CD8-positive, alpha-beta T cell (primary cell): ENCODE measurements at regions of chr14 and their contacts with region 1.

Region 1: DNA sequence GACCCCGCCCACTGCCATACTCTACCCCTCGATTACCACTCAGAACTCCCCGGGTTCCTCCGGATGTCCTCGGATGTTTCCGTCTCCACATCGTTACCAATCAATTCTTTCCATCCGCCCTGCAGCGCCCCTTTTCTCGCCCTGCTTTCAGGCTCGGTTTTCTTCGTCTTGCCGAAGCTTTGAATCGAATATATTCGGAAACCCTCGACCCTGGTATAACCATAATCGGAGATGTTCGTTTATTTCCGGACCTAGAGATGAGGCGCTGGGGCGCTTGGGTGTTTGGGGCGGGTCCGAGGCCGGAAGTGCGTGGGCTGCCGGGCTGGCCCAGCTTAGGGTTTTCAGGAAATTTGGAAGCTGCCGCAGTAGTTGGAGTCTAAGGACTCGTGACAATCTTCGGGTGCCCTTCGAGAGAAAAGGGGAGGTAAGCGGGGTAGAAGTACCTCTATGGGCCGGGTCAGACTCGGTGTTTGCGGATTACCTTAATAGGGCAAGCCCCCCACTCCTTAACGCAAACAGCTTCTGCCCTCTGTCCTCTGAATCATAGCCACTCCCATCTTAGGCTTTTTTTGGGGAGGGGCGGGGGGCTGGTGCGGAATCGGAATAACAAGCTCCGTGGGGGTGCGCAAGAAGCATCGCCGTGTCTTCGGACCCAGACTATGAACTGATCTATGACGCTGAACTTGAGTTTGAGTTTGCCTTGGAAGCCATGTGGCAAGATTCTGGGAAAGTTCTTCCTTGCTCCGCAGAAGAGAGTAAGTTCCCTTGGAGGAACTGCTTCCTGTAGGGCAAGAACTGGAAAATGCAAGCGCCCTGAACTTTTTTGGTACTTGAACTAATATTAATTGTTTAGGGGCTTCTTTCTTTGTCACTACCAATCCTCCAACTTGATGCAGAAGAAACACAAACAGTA is at the start of gene C14orf119:
- DNase-seq: peak in 8 of 9 experiments; percentile 98 to 100 (median 100)
- ATAC-seq: peak; percentile 86
- H3K4me3 ChIP-seq: peak within 1 kb of the TSS; percentile 81 to 93
- H3K4me3 Mint-ChIP-seq: no peak within 1 kb of the TSS
- H3K27ac ChIP-seq: peak within 1 kb of the TSS; percentile 93 to 98
- H3K27ac Mint-ChIP-seq: no peak within 1 kb of the TSS
- H3K4me1 ChIP-seq: peaks cover 39% of the 10 kb centered on the region
- H3K4me1 Mint-ChIP-seq: peaks cover 51% of the 10 kb centered on the region
- H3K27me3 ChIP-seq: no peaks in the 10 kb centered on the region
- H3K27me3 Mint-ChIP-seq: no peaks in the 10 kb centered on the region
- CTCF ChIP-seq: no peak
- total RNA-seq, gene C14orf119: 3.5 to 3.8 TPM

Region 2: GRCh38 chr14:22375321-22375930 is 720.0 kb before region 1 on chr14:
- CTCF ChIA-PET with region 1: no interaction called
- POLR2A ChIA-PET with region 1: no interaction called
- intact Hi-C with region 1: no loop called
- DNase-seq: peak in 2 of 9 experiments; percentile 12 to 20
- ATAC-seq: no peak
- H3K4me3 ChIP-seq: no peak overlapping the region
- H3K4me3 Mint-ChIP-seq: no peak overlapping the region
- H3K27ac ChIP-seq: no peak overlapping the region
- H3K27ac Mint-ChIP-seq: no peak overlapping the region
- H3K4me1 ChIP-seq: no peaks in the 10 kb centered on the region
- H3K4me1 Mint-ChIP-seq: no peaks in the 10 kb centered on the region
- H3K27me3 ChIP-seq: no peaks in the 10 kb centered on the region
- H3K27me3 Mint-ChIP-seq: no peaks in the 10 kb centered on the region
- CTCF ChIP-seq: no peak

Region 3: GRCh38 chr14:22829661-22830442 is 265.6 kb before region 1 on chr14 and contains the start of gene MRPL52:
- CTCF ChIA-PET with region 1: no interaction called
- POLR2A ChIA-PET with region 1: no interaction called
- intact Hi-C with region 1: no loop called
- DNase-seq: peak; percentile 81 to 97 (median 90)
- ATAC-seq: peak; percentile 95
- H3K4me3 ChIP-seq: peak within 1 kb of the TSS; percentile 89 to 91
- H3K4me3 Mint-ChIP-seq: peak within 1 kb of the TSS; percentile 92
- H3K27ac ChIP-seq: peak within 1 kb of the TSS; percentile 69 to 90
- H3K27ac Mint-ChIP-seq: peak within 1 kb of the TSS; percentile 96
- H3K4me1 ChIP-seq: peaks cover 13% of the 10 kb centered on the region
- H3K4me1 Mint-ChIP-seq: peaks cover 31% of the 10 kb centered on the region
- H3K27me3 ChIP-seq: peaks cover 0 to 5% of the 10 kb centered on the region in 2 experiments
- H3K27me3 Mint-ChIP-seq: peaks cover 7% of the 10 kb centered on the region
- CTCF ChIP-seq: no peak
- total RNA-seq, gene MRPL52: 22.3 to 25.7 TPM

Region 4: DNA sequence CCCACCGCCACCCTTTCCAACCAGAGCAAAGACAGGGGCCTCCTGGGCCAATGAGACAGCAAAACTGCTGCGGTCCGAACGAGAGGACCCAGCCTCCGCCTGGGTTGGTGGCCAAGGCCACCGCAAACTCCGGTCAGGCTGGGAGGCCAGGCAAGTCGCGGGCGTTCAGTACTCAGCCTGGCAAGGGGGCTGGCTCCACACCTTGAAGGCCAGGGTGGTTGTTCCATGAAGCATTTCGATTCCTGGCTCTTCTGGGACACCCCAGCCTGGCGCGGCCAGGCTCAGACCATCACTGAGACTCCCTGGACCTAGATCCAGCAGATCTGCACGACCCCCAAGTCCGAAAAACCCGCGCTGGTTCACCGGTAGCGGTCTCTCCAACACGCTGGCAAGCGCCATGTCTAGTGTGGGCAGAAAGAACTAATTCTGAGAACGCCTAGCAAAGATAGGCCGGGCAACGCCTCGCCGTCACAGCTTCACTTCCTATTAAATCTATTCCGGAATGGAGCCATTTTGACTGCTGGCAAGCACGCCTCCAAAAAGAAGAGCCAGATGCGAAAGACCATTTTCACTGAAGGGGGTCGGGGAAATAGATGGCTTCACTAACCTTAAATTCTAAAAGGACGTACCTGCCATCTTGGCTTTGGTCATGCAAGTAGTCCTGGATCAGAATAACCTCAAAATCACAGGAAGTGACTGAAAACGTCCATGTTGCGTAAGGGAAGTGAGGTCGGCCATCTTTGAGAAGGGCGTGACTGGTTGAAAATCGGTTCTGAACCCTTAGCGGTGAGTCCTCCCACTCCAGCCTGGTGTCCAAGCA is 60.8 kb before region 1 on chr14 and contains the start of gene PSMB5:
- CTCF ChIA-PET with region 1: no interaction called
- POLR2A ChIA-PET with region 1: no interaction called
- intact Hi-C with region 1: loop called (anchors 1 to 2 kb)
- DNase-seq: peak; percentile 74 to 97 (median 87)
- ATAC-seq: peak; percentile 91
- H3K4me3 ChIP-seq: peak within 1 kb of the TSS; percentile 67 to 71
- H3K4me3 Mint-ChIP-seq: peak within 1 kb of the TSS; percentile 90
- H3K27ac ChIP-seq: peak within 1 kb of the TSS; percentile 75 to 97
- H3K27ac Mint-ChIP-seq: peak within 1 kb of the TSS; percentile 98
- H3K4me1 ChIP-seq: peaks cover 21% of the 10 kb centered on the region
- H3K4me1 Mint-ChIP-seq: peaks cover 34% of the 10 kb centered on the region
- H3K27me3 ChIP-seq: no peaks in the 10 kb centered on the region
- H3K27me3 Mint-ChIP-seq: no peaks in the 10 kb centered on the region
- CTCF ChIP-seq: no peak
- total RNA-seq, gene PSMB5: 18.6 to 20.2 TPM

Region 5: GRCh38 chr14:23076785-23077408 is 18.6 kb before region 1 on chr14:
- CTCF ChIA-PET with region 1: interaction called, 37 read pairs
- POLR2A ChIA-PET with region 1: interaction called, 16 read pairs
- intact Hi-C with region 1: no loop called
- DNase-seq: peak in 3 of 9 experiments; percentile 43 to 66 (median 56)
- ATAC-seq: peak; percentile 89
- H3K4me3 ChIP-seq: no peak overlapping the region
- H3K4me3 Mint-ChIP-seq: no peak overlapping the region
- H3K27ac ChIP-seq: no peak overlapping the region
- H3K27ac Mint-ChIP-seq: no peak overlapping the region
- H3K4me1 ChIP-seq: peaks cover 2% of the 10 kb centered on the region
- H3K4me1 Mint-ChIP-seq: peaks cover 19% of the 10 kb centered on the region
- H3K27me3 ChIP-seq: no peaks in the 10 kb centered on the region
- H3K27me3 Mint-ChIP-seq: no peaks in the 10 kb centered on the region
- CTCF ChIP-seq: peak; percentile 85

Region 6: GRCh38 chr14:23286020-23286905 is 190.8 kb after region 1 on chr14 and contains the start of gene HOMEZ:
- CTCF ChIA-PET with region 1: no interaction called
- POLR2A ChIA-PET with region 1: no interaction called
- intact Hi-C with region 1: loop called in 1 of 2 experiments (anchors 1 kb)
- DNase-seq: peak; percentile 94 to 98 (median 97)
- ATAC-seq: peak; percentile 96
- H3K4me3 ChIP-seq: peak within 1 kb of the TSS; percentile 89 to 94
- H3K4me3 Mint-ChIP-seq: peak within 1 kb of the TSS; percentile 99
- H3K27ac ChIP-seq: peak within 1 kb of the TSS; percentile 67 to 83
- H3K27ac Mint-ChIP-seq: peak within 1 kb of the TSS; percentile 96
- H3K4me1 ChIP-seq: peaks cover 20% of the 10 kb centered on the region
- H3K4me1 Mint-ChIP-seq: peaks cover 36% of the 10 kb centered on the region
- H3K27me3 ChIP-seq: no peaks in the 10 kb centered on the region
- H3K27me3 Mint-ChIP-seq: no peaks in the 10 kb centered on the region
- CTCF ChIP-seq: no peak
- total RNA-seq, gene HOMEZ: 3.1 to 4.0 TPM

Region 7: DNA sequence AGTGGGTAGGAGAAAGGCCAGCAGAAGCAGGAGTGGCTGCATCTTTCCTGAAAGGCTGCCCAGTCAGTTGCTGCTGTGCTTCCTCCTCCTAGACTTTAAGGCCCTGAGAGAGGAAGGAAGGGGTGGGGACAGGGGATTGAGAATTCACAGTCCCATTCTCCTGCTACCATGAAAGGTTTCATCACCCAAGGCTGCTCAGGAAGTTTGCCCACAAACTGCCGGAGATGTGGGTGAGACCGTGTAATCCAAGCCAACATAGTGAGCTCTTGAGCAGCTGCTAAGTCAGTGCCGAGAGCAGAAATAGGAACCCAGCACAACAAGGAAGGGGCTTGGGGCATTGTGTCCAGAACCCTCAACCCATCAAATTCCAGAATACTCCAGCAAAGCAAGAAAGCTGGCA is 1480.7 kb after region 1 on chr14 and contains the start of gene CTSG:
- CTCF ChIA-PET with region 1: no interaction called
- POLR2A ChIA-PET with region 1: no interaction called
- intact Hi-C with region 1: no loop called
- DNase-seq: no peak
- ATAC-seq: no peak
- H3K4me3 ChIP-seq: no peak within 1 kb of the TSS
- H3K4me3 Mint-ChIP-seq: no peak within 1 kb of the TSS
- H3K27ac ChIP-seq: no peak within 1 kb of the TSS
- H3K27ac Mint-ChIP-seq: no peak within 1 kb of the TSS
- H3K4me1 ChIP-seq: no peaks in the 10 kb centered on the region
- H3K4me1 Mint-ChIP-seq: no peaks in the 10 kb centered on the region
- H3K27me3 ChIP-seq: no peaks in the 10 kb centered on the region
- H3K27me3 Mint-ChIP-seq: peaks cover 6% of the 10 kb centered on the region
- CTCF ChIP-seq: no peak
- total RNA-seq, gene CTSG: not detected